ENCODE measurements at regions of chr3 and their contacts with region 1.

Region 1: DNA sequence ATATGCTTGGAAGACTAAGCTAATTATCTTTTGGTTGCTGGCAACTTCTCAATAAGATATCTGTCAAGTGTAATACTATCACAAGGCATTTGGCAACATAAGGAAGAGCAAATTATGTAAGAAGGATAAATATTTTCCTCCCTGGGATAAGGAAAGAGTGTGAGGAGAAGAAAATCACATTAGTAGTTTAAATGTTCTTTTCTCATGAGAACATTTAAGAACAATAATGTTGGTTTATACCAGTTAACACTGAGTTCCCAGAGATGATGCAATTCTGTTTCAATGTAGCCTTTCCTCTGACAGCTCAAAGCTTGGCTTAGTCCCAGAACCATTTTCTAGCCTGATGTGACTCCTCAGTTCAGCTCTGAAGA is 66.1 kb upstream of the NPHP3 start:
- DNase-seq: no peak
- ATAC-seq: no peak
- H3K4me3 ChIP-seq: no peak overlapping the region
- H3K4me3 Mint-ChIP-seq: no peak overlapping the region
- H3K27ac ChIP-seq: no peak overlapping the region
- H3K27ac Mint-ChIP-seq: no peak overlapping the region
- H3K4me1 ChIP-seq: no peaks in the 10 kb centered on the region
- H3K4me1 Mint-ChIP-seq: no peaks in the 10 kb centered on the region
- H3K27me3 ChIP-seq: no peaks in the 10 kb centered on the region
- H3K27me3 Mint-ChIP-seq: peaks cover 15 to 26% of the 10 kb centered on the region in 2 donors

Region 2: GRCh38 chr3:133426721-133427120 is 638.4 kb after region 1 on chr3:
- CTCF ChIA-PET with region 1: no interaction called
- POLR2A ChIA-PET with region 1: interaction called in 1 of 2 experiments, 15 read pairs
- DNase-seq: no peak
- ATAC-seq: no peak
- H3K4me3 ChIP-seq: no peak overlapping the region
- H3K4me3 Mint-ChIP-seq: no peak overlapping the region
- H3K27ac ChIP-seq: no peak overlapping the region
- H3K27ac Mint-ChIP-seq: peak overlapping the region in 1 of 2 donors; percentile 28
- H3K4me1 ChIP-seq: no peaks in the 10 kb centered on the region
- H3K4me1 Mint-ChIP-seq: peaks cover 2 to 9% (median 2%) of the 10 kb centered on the region in 3 donors
- H3K27me3 ChIP-seq: peaks cover 0 to 2% of the 10 kb centered on the region in 2 experiments
- H3K27me3 Mint-ChIP-seq: peaks cover 0 to 9% of the 10 kb centered on the region in 2 donors

Measured in T-cell (primary cell).